Activated CD4-positive, alpha-beta memory T cell treated with anti-CD3 and anti-CD28 coated beads for 36 hours (primary cell): ENCODE measurements at regions of chr7 and their contacts with region 1.

Region 1: GRCh38 chr7:35801392-35802101 is 690 bp downstream of the SEPTIN7 start:
- DNase-seq: peak; percentile 80
- H3K4me3 Mint-ChIP-seq: peak overlapping the region; percentile 97
- H3K27ac Mint-ChIP-seq: peak overlapping the region; percentile 98
- H3K4me1 Mint-ChIP-seq: peaks cover 44% of the 10 kb centered on the region
- H3K27me3 Mint-ChIP-seq: no peaks in the 10 kb centered on the region

Region 2: DNA sequence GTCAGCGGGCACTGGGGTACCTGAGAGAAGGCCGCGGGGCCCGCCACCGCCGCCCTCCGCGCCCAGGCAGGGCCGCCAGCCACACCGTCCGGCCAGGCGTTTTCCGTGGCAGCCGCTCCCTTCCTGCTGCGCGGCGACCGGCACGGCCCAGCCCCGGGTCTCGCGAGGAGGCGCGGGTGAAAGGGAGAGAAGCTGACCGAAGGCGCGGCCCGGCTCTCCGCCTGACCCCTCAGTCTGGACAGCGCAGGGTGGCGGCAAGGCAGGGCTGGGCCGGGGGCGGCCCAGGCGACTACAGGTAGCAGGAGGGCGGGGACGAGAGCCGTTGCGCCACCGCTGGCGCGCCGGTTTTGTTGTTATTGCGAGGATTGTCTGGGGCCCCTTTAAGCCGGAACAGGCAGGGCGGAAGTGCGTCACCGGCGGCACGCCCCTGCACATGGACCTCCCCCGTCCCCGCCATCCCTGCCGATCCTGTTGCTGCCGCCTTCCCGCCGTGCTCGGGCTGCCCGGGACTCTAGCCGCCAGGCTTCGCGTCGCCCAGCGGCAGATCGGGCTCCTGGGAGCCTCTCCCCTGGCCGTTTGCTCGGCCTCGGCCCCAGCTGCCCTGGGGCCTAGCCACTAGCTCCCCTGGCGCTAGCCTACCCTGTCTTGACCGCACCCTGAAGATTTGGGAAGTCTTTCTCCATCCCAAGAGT is 106.6 kb before region 1 on chr7 and contains the start of gene HERPUD2:
- CTCF ChIA-PET with region 1: interaction called, 26 read pairs
- POLR2A ChIA-PET with region 1: interaction called, 70 read pairs
- intact Hi-C with region 1: loop called (anchors 1 kb)
- DNase-seq: peak; percentile 95
- H3K4me3 Mint-ChIP-seq: peak within 1 kb of the TSS; percentile 93
- H3K27ac Mint-ChIP-seq: peak within 1 kb of the TSS; percentile 98
- H3K4me1 Mint-ChIP-seq: peaks cover 45% of the 10 kb centered on the region
- H3K27me3 Mint-ChIP-seq: no peaks in the 10 kb centered on the region
- total RNA-seq, gene HERPUD2: 26.2 to 29.6 TPM

Region 3: DNA sequence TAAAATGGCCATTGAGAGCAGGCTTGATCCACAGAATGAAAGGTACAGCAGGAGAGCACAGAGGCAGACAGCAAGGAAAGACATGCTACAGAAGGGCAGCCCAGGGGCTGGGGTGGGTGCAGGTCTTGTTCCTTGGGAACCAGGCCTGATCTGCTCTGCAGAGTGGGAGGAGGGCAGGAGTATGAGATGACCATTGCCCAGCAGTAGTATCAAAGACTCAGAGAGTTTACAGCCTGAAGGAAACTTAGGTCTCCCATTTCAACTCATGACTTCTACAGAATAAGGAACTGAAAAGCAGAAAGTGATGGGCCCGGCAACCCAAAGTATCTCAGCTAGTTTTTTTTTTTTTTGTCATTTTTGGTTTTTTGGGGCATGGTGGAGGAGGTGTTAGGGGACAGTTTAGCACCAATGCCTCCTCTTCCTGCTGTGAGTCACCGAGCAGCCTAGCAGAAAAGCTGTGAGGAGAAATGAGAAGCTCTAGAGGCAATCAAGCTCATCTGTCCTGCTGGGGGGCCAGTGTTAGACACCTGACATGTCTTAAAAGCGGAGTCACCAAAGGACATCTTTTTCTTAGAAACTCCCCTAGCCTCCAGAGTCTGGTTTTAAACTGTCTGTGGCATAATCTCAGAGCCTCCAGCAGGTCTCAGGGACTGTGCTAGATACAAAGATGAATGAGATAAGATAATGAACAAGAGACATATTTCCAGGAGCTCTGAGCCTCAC is 72.3 kb before region 1 on chr7:
- CTCF ChIA-PET with region 1: interaction called, 46 read pairs
- POLR2A ChIA-PET with region 1: interaction called, 35 read pairs
- intact Hi-C with region 1: loop called (anchors 1 kb)
- DNase-seq: peak; percentile 68
- H3K4me3 Mint-ChIP-seq: no peak overlapping the region
- H3K27ac Mint-ChIP-seq: peak overlapping the region; percentile 15
- H3K4me1 Mint-ChIP-seq: peaks cover 61% of the 10 kb centered on the region
- H3K27me3 Mint-ChIP-seq: peaks cover 3% of the 10 kb centered on the region

Region 4: DNA sequence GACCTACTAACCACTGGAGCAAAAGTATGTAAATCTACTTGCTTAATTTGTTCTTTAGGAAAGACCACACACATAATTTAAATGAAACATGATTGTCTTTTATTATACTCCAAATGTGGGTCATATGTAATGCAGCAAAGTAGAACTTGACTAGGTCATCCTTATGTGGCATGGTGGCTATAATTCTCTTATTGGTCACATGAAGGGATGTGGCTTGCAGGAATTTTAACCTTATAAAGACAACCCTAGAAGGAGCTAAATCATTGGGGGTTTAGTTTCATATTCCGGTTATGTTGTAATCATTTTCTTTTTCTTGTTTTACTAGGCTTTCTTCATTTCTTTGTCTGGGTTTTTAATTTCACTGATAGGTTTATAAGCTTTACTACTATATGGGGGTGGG is 93.2 kb after region 1 on chr7:
- CTCF ChIA-PET with region 1: interaction called, 3 read pairs
- POLR2A ChIA-PET with region 1: no interaction called
- intact Hi-C with region 1: loop called (anchors 5 kb)
- DNase-seq: no peak
- H3K4me3 Mint-ChIP-seq: no peak overlapping the region
- H3K27ac Mint-ChIP-seq: peak overlapping the region; percentile 54
- H3K4me1 Mint-ChIP-seq: peaks cover 32% of the 10 kb centered on the region
- H3K27me3 Mint-ChIP-seq: no peaks in the 10 kb centered on the region

Region 5: DNA sequence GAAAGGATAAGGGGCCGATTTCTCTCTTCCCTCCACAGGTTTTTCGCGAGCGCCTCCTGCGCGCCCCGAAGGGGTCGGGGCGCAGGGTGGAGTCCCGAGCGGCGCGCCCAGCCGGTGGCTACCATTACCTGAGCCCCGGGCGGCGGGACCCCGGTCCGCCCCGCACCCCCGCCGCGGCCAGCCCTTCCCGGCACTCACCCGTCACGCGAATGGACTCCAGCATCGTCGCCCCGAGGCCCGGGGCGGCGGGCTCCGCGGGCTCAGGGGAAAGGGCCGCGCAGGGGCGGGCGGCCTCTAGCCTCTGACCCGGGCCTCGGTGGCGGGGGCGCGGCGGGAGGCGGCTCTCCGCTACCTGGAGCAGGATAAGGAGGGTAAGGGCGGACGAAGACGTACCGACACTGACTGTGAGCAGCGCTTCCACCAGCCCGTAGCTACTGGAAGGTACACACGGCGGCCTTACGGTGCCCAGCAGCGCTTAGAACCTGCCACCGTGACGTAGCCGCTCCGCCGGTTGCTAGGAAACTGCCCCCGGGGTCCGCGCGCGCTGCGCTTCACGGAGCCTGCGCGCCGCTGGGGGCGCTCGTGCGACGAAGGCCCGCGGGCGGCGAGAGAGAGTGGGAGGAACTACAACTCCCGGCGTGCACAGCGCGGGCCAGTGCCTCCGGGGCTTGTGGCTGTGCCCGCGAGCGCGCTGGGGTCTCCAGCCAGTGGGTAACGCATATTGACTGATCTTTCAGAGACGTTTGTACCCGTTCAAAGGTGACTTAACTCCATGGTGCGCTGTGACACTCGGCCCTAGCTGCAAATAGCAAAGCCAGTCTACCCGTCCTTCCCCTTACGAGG is 565.4 kb after region 1 on chr7:
- CTCF ChIA-PET with region 1: no interaction called
- POLR2A ChIA-PET with region 1: no interaction called
- intact Hi-C with region 1: loop called (anchors 10 kb)
- DNase-seq: peak; percentile 94
- H3K4me3 Mint-ChIP-seq: peak overlapping the region; percentile 88
- H3K27ac Mint-ChIP-seq: no peak overlapping the region
- H3K4me1 Mint-ChIP-seq: no peaks in the 10 kb centered on the region
- H3K27me3 Mint-ChIP-seq: peaks cover 2% of the 10 kb centered on the region